Activated CD4-positive, alpha-beta T cell treated with anti-CD3 and anti-CD28 coated beads, Interleukin-2, amount 10 ng/mL, durations not matched to agents 24 days and 14 days (primary cell): ENCODE measurements at regions of chr1 and their contacts with region 1.

Region 1: GRCh38 chr1:41432481-41433280 is 51.8 kb downstream of the EDN2 start:
- DNase-seq: peak; percentile 90
- H3K4me3 Mint-ChIP-seq: no peak overlapping the region
- H3K27ac Mint-ChIP-seq: no peak overlapping the region
- H3K4me1 Mint-ChIP-seq: no peaks in the 10 kb centered on the region
- H3K27me3 Mint-ChIP-seq: peaks cover 4% of the 10 kb centered on the region

Region 2: GRCh38 chr1:41045740-41046139 is 386.9 kb before region 1 on chr1:
- intact Hi-C with region 1: no loop called
- DNase-seq: no peak
- H3K4me3 Mint-ChIP-seq: no peak overlapping the region
- H3K27ac Mint-ChIP-seq: no peak overlapping the region
- H3K4me1 Mint-ChIP-seq: peaks cover 8% of the 10 kb centered on the region
- H3K27me3 Mint-ChIP-seq: no peaks in the 10 kb centered on the region

Region 3: DNA sequence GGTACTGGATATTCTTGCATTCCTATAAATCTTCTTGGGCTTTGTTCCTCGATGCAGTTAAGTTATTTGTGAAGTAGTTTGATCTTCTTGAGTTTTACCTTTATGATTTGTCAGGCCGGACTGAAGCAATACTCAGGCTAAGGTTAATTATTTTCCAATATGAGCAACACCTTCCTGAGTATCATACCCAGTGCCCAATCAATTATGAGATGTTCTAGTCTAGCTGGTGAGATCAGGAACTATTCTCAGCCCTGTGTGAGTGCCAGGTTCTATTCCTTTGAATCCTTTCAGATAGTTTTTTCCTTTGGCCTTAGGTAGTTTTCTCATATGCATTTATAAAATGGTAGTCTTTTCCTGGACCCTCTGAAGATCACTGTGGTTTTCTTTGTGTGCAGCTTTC is 283.1 kb before region 1 on chr1:
- intact Hi-C with region 1: no loop called
- DNase-seq: no peak
- H3K4me3 Mint-ChIP-seq: no peak overlapping the region
- H3K27ac Mint-ChIP-seq: no peak overlapping the region
- H3K4me1 Mint-ChIP-seq: no peaks in the 10 kb centered on the region
- H3K27me3 Mint-ChIP-seq: no peaks in the 10 kb centered on the region

Region 4: DNA sequence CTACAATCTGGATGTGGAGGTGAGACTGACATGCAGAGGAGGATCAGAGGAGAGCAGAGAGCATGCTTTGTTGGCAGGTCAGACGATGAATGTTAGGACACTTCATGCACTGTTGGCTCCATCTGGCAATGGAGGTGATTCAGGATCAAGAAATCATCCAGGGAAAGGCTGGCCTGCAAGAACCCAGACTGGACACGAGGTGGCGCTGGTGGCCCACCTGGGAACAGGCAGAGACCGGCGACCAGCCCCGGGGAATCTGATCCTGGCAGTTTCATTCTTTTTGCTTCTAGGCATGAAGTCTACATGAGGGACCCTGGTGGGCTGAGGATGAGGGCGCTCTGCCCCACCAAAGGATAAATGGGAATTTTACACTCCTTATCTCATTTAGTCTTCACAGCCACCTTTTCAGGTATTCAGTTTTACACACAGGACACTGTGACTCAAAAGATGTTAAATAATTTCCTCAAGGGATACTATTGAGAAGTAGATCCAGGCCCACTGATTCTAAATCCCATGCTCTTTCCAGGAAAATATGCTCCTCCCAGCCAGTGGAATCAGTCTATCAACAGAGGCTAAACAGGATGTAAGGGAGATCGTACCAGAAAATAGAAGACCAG is 164.4 kb before region 1 on chr1:
- intact Hi-C with region 1: loop called (anchors 1 kb)
- DNase-seq: peak; percentile 89
- H3K4me3 Mint-ChIP-seq: no peak overlapping the region
- H3K27ac Mint-ChIP-seq: no peak overlapping the region
- H3K4me1 Mint-ChIP-seq: no peaks in the 10 kb centered on the region
- H3K27me3 Mint-ChIP-seq: peaks cover 16% of the 10 kb centered on the region

Region 5: GRCh38 chr1:41282679-41283317 is 149.9 kb before region 1 on chr1:
- intact Hi-C with region 1: loop called (anchors 5 kb)
- DNase-seq: peak; percentile 72
- H3K4me3 Mint-ChIP-seq: no peak overlapping the region
- H3K27ac Mint-ChIP-seq: no peak overlapping the region
- H3K4me1 Mint-ChIP-seq: peaks cover 2% of the 10 kb centered on the region
- H3K27me3 Mint-ChIP-seq: peaks cover 18% of the 10 kb centered on the region